ENCODE measurements at regions of chr4 and their contacts with region 1.

Region 1: GRCh38 chr4:80215449-80216052 is 18.2 kb downstream of the PRDM8 start:
- DNase-seq: no peak
- ATAC-seq: peak; percentile 62
- H3K4me3 ChIP-seq: no peak overlapping the region
- H3K27ac ChIP-seq: no peak overlapping the region
- H3K4me1 ChIP-seq: peaks cover 0 to 7% of the 10 kb centered on the region in 2 donors
- H3K27me3 ChIP-seq: peaks cover 28 to 58% of the 10 kb centered on the region in 2 donors
- CTCF ChIP-seq: peak; percentile 58 to 63

Region 2: GRCh38 chr4:78939667-78940008 is 1275.9 kb before region 1 on chr4:
- intact Hi-C with region 1: loop called in 1 of 2 experiments (anchors 10 kb)
- DNase-seq: no peak
- ATAC-seq: peak; percentile 20
- H3K4me3 ChIP-seq: peak overlapping the region; percentile 74 to 82
- H3K27ac ChIP-seq: peak overlapping the region in 1 of 2 donors; percentile 74
- H3K4me1 ChIP-seq: peaks cover 0 to 35% of the 10 kb centered on the region in 2 donors
- H3K27me3 ChIP-seq: no peaks in the 10 kb centered on the region
- CTCF ChIP-seq: no peak